CD14-positive monocyte (primary cell): ENCODE measurements at regions of chr2 and their contacts with region 1.

Region 1: DNA sequence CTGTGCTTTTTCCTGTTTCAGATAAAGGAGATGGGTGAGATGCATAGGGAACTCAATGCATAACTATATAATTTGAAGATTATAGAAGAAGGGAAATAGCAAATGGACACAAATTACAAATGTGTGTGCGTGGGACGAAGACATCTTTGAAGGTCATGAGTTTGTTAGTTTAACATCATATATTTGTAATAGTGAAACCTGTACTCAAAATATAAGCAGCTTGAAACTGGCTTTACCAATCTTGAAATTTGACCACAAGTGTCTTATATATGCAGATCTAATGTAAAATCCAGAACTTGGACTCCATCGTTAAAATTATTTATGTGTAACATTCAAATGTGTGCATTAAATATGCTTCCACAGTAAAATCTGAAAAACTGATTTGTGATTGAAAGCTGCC is 16.4 kb upstream of the MSH2 start:
- DNase-seq: no peak
- H3K4me3 ChIP-seq: no peak overlapping the region
- H3K4me3 Mint-ChIP-seq: no peak overlapping the region
- H3K27ac ChIP-seq: no peak overlapping the region
- H3K27ac Mint-ChIP-seq: no peak overlapping the region
- H3K4me1 ChIP-seq: no peaks in the 10 kb centered on the region
- H3K4me1 Mint-ChIP-seq: peaks cover 3% of the 10 kb centered on the region
- H3K27me3 ChIP-seq: no peaks in the 10 kb centered on the region
- H3K27me3 Mint-ChIP-seq: peaks cover 9 to 13% (median 10%) of the 10 kb centered on the region in 3 donors
- CTCF ChIP-seq: no peak

Region 2: DNA sequence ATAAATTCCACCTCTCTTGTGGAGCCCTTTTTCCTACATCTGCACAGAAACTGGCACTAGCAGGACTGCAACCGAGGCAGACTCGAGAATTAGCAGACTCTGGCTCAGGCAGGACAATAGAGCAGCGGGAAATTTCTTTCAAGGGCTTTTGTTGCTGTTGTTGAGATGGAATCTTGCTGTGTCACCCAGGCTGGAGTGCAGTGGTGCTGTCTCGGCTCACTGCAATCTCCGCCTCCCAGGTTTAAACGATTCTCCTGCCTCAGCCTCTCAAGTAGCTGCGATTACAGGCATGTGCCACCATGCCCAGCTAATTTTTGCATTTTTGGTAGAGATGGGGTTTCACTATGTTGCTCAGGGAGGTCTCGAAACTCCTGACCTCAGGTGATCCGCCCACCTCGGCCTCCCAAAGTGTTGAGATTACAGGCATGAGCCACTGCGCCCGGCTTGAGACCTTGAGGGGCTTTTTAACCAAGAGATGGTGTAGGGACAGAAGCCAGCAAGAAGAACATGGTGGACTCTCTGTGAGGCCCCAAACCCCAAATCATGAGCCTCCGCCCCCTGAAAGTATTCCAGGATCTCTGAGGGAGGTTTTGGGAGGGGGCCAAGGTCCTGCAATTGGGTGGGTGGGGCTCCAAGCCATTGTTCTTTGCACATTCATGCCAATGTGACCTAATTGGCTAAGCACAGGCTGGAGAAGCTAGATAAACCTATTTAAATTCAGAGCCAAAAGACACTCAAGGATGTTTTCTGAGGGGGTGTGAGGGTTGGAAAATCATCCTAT is 52.0 kb before region 1 on chr2:
- intact Hi-C with region 1: loop called (anchors 2 to 5 kb)
- DNase-seq: no peak
- H3K4me3 ChIP-seq: no peak overlapping the region
- H3K4me3 Mint-ChIP-seq: no peak overlapping the region
- H3K27ac ChIP-seq: no peak overlapping the region
- H3K27ac Mint-ChIP-seq: no peak overlapping the region
- H3K4me1 ChIP-seq: peaks cover 18 to 25% of the 10 kb centered on the region in 2 donors
- H3K4me1 Mint-ChIP-seq: peaks cover 28% of the 10 kb centered on the region
- H3K27me3 ChIP-seq: no peaks in the 10 kb centered on the region
- H3K27me3 Mint-ChIP-seq: peaks cover 0 to 7% (median 5%) of the 10 kb centered on the region in 3 donors
- CTCF ChIP-seq: no peak

Region 3: GRCh38 chr2:47339745-47340541 is 46.6 kb before region 1 on chr2:
- intact Hi-C with region 1: loop called (anchors 2 to 5 kb)
- DNase-seq: no peak
- H3K4me3 ChIP-seq: no peak overlapping the region
- H3K4me3 Mint-ChIP-seq: no peak overlapping the region
- H3K27ac ChIP-seq: no peak overlapping the region
- H3K27ac Mint-ChIP-seq: no peak overlapping the region
- H3K4me1 ChIP-seq: peaks cover 20 to 29% of the 10 kb centered on the region in 2 donors
- H3K4me1 Mint-ChIP-seq: peaks cover 37% of the 10 kb centered on the region
- H3K27me3 ChIP-seq: no peaks in the 10 kb centered on the region
- H3K27me3 Mint-ChIP-seq: peaks cover 3 to 13% (median 7%) of the 10 kb centered on the region in 3 donors
- CTCF ChIP-seq: no peak